ENCODE measurements at regions of chr5 and their contacts with region 1.

Region 1: DNA sequence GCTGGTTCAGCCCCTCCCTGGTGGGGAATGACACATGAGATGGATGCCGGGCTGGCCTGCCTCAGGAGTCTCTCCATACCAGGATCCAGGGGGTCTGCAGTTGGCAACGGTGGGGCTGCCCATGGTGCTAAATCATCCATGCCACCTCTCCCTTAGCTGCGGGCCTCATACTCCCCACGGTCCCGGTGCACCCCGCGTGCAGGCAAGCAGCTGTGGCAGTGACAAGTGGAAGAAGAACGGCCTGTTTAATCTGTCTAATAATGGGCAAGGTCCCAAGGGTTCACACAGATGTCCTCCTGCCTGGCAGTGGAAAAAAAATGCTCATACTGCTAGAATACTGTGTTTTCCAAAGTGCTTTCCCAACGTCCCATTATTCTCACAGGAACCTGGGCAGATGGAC is 196.9 kb upstream of the PANK3 start:
- DNase-seq: no peak
- ATAC-seq: no peak

Region 2: GRCh38 chr5:168801567-168801966 is 25.5 kb after region 1 on chr5:
- intact Hi-C with region 1: loop called (anchors 1 kb)
- DNase-seq: no peak
- ATAC-seq: no peak